ENCODE measurements at regions of chr12 and their contacts with region 1.

Region 1: DNA sequence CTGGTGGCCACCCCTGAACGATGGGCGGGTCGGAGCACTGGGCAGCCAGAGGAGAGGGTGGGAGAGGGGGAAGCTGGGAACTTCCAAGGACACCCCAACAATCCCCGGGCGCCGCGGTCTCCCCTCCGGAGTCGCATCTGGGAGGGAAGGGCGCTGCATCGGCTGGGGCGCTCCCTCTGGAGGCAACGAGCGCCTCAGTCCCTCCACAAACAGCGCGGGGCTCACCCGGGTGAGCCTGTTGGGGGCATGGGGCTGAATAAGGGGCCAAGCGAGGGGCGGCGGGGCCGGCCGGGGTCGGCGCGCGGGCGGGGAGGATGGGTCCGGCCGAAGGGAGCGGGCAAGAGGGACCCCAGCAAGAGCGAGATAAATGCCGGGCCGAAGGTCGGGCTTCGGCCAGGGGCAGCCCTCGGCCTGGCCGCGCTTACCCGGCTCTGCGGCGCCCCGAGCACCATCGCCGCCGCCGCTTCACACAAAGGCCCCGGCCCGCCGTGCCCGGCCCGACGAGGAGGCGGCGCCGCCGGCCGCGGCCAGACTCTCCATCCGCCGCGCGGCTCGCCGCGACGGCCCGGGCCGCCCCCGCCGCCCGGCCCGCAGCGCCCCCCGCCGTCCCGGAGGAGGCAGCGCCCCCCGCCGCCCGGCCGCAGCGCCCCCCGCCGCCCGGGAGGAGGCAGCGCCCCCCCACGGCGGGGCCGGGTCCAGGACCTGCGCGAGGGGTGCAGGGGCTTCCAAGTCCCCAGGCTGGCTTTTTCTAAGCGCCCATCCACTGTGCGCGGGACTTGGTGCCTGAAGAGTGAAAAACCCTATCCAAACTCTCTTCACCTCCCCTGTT is at the start of gene ZBTB39:
- DNase-seq: peak; percentile 92
- CTCF ChIP-seq: peak; percentile 71

Region 2: DNA sequence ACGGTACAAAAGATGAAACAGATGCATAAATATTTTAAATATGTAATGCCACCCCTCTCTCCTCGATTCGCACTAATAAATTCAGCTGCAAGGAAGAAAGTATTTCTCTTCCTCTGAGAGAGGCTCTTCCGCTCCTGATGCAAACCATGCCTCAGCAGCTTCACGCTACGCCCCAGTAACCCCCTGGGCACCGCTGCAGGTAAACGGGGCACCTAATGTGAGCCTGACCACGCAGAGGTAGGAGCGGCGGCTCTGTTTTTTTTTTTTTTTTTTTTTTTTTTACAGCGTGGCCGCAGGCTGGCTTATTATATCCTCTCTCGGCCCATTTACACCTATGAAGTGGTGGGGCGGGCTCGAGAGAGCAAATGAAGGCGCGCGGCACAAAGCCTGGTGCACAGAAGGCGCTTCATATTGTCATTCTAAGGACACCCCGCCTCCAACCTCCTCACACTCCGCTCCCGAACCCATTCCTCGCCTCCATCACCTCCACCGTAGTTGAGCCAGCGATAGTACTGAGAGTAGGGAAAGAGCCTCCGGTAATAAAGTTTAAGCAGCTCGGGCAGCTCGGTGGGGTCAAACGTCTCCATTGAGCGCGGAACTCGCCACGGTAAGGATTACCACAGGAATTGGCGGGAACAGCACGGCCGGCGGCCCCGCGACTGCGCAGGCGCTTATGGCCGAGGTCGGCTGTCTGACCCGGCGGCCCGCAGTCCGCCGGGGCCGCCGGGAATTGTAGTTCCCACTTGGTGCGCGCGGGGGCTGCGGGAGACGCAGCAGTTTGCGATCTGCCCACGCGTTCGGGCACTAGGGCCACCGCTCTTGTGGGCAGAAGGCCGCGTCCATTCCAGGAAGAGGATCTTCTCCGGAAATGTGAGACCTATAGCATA is 254.2 kb before region 1 on chr12 and contains the start of gene PRIM1:
- CTCF ChIA-PET with region 1: interaction called, 148 read pairs
- POLR2A ChIA-PET with region 1: no interaction called
- DNase-seq: peak; percentile 94
- CTCF ChIP-seq: no peak

Region 3: DNA sequence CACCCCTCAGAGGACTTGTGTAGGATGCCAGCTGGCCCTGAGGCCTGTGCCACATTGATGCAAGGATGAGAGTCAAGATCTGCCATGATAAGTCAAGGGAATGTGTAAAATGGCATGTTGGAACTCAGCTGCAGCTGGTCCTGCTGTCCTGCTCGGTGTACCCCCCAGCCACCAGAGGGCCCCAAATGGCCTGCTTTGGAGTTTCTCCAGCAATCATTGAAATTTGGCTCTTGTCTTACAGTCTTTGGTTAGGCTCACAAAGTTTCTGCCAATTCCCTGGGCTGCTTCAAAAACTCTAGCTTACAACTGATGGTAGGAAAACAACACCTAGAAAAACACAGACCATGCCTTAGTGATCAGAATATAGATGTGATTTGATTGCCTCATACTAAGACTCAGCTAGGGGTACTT is 166.3 kb before region 1 on chr12:
- CTCF ChIA-PET with region 1: interaction called, 28 read pairs
- POLR2A ChIA-PET with region 1: no interaction called
- DNase-seq: peak; percentile 41
- CTCF ChIP-seq: peak; percentile 70

Region 4: DNA sequence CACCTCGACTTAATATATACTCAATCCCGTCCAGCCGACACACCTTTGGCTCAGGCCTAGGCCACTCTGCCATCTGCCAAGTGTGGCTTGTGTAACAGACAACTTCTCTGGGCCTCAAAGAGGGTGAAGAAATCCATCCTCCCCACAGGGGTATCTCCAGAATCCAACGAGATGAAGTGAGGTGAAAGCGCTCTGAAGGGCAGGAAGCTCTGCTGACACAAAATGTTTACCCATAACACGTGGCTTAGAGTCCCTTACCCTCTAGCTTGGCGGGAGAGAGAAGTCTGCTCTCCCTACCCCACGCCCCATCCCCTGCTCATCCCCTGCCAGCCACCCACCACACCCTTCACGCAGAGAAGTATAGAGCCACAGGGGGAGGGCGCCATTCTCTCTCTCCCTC is 12.8 kb before region 1 on chr12:
- CTCF ChIA-PET with region 1: interaction called, 122 read pairs
- POLR2A ChIA-PET with region 1: interaction called, 3 read pairs
- DNase-seq: no peak
- CTCF ChIP-seq: no peak

Region 5: DNA sequence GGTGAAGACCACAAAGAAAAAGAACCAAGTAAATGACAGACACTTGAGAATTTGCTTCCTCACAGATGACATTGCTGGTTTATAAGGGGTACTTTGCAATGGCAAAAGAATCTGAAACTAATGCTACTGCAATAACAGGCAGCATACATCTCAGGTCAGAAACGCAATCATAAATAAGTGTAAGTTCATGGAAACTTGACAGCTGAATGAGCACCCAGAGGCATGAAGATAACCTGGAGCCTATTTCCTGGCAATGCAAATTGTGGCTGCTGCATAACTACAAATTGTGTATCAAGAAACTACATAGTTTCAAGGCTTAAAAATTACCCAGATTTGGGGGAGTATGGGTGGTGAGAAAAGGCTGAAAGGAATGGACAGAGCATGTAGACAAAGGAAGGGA is 52.3 kb after region 1 on chr12:
- CTCF ChIA-PET with region 1: interaction called, 11 read pairs
- POLR2A ChIA-PET with region 1: no interaction called
- DNase-seq: no peak
- CTCF ChIP-seq: no peak

Region 6: GRCh38 chr12:57078519-57079404 is 72.6 kb after region 1 on chr12 and contains the start of gene NEMP1:
- CTCF ChIA-PET with region 1: interaction called, 12 read pairs
- POLR2A ChIA-PET with region 1: no interaction called
- DNase-seq: peak; percentile 96
- CTCF ChIP-seq: no peak

Region 7: GRCh38 chr12:58131986-58132755 is 1126.0 kb after region 1 on chr12:
- CTCF ChIA-PET with region 1: no interaction called
- POLR2A ChIA-PET with region 1: no interaction called
- DNase-seq: no peak
- CTCF ChIP-seq: no peak

Region 8: DNA sequence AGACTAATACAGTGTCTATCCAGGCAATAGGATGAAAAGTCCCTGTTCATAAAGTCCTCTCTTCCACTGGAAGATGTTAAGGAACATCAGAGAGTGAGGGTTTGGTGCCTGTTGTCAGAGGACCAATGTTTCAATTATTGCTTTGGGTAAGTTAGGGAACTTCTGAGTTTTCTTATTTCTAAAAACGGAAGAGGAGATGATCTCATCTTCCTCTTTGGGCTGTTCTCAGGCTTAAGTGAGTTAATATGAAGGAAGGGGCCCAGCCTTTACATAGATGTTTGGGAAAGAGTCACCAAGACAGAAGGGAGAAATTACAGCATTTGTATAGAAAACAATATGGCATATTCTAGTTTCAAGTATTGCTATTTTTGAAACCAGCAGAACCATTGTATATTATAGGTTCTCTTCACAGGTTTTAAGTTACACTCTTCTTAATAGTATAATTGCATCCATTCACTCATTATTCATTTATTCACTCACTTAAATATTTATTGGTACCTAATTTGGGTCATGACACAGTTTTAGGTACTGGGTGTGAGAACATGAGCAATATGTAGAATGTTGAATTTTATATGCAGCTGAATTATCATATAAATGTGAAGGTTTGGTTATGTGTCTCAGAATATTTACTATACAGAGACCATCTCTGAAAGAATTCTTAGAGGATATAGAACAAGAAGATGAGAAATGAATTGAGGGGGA is 1982.6 kb after region 1 on chr12:
- CTCF ChIA-PET with region 1: no interaction called
- POLR2A ChIA-PET with region 1: no interaction called
- DNase-seq: no peak
- CTCF ChIP-seq: no peak

Measured in GM10248 (cell line).